Ovary (tissue), 10 donors: ENCODE measurements at regions of chr9 and their contacts with region 1.

Region 1: DNA sequence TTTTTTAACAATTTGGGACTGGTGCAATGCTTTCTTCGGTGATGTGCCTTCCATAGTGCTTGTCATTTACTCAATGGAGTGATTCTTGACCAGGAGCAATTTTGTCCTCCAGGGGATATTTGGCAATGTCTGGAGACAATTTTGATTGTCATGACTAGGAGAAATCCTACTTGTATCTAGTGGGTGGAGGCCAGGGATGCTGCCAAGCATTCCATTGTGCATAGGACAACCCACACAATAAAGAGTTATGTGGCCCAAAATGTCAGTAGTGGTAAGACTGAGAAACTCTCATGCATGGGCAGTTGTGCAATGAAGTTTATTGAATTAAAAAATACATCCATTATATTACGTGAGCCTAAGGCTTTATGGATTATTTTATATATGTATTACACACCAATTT is 70.5 kb downstream of the FOCAD start:
- DNase-seq: no peak
- H3K4me3 ChIP-seq: no peak overlapping the region
- H3K27ac ChIP-seq: no peak overlapping the region
- H3K4me1 ChIP-seq: no peaks in the 10 kb centered on the region
- H3K27me3 ChIP-seq: no peaks in the 10 kb centered on the region
- CTCF ChIP-seq: no peak
- EP300 ChIP-seq: no peak
- POLR2A ChIP-seq: no peak

Region 2: GRCh38 chr9:21408817-21409216 is 654.3 kb after region 1 on chr9 and contains the start of gene IFNA8:
- intact Hi-C with region 1: loop called in 1 of 4 experiments (anchors 5 kb)
- DNase-seq: no peak
- H3K4me3 ChIP-seq: no peak within 1 kb of the TSS
- H3K27ac ChIP-seq: no peak within 1 kb of the TSS
- H3K4me1 ChIP-seq: no peaks in the 10 kb centered on the region
- H3K27me3 ChIP-seq: no peaks in the 10 kb centered on the region
- CTCF ChIP-seq: no peak
- EP300 ChIP-seq: no peak
- POLR2A ChIP-seq: no peak
- total RNA-seq, gene IFNA8: not detected